ENCODE measurements at regions of chr15 and their contacts with region 1.

Region 1: GRCh38 chr15:53512030-53512429 is 247.4 kb downstream of the WDR72 start:
- DNase-seq: no peak
- H3K4me3 Mint-ChIP-seq: no peak overlapping the region
- H3K27ac Mint-ChIP-seq: no peak overlapping the region
- H3K4me1 Mint-ChIP-seq: no peaks in the 10 kb centered on the region
- H3K27me3 Mint-ChIP-seq: no peaks in the 10 kb centered on the region
- CTCF ChIP-seq: no peak

Region 2: GRCh38 chr15:53209389-53210042 is 302.5 kb before region 1 on chr15:
- CTCF ChIA-PET with region 1: no interaction called
- intact Hi-C with region 1: loop called (anchors 10 kb)
- DNase-seq: no peak
- H3K4me3 Mint-ChIP-seq: no peak overlapping the region
- H3K27ac Mint-ChIP-seq: no peak overlapping the region
- H3K4me1 Mint-ChIP-seq: peaks cover 7% of the 10 kb centered on the region
- H3K27me3 Mint-ChIP-seq: no peaks in the 10 kb centered on the region
- CTCF ChIP-seq: no peak